ENCODE measurements at regions of chr1 and their contacts with region 1.

Region 1: GRCh38 chr1:67430352-67431155 is at the start of gene SERBP1:
- H3K4me3 Mint-ChIP-seq: peak within 1 kb of the TSS; percentile 97
- H3K27ac Mint-ChIP-seq: peak within 1 kb of the TSS; percentile 95
- H3K4me1 Mint-ChIP-seq: peaks cover 50% of the 10 kb centered on the region
- H3K27me3 Mint-ChIP-seq: no peaks in the 10 kb centered on the region

Region 2: DNA sequence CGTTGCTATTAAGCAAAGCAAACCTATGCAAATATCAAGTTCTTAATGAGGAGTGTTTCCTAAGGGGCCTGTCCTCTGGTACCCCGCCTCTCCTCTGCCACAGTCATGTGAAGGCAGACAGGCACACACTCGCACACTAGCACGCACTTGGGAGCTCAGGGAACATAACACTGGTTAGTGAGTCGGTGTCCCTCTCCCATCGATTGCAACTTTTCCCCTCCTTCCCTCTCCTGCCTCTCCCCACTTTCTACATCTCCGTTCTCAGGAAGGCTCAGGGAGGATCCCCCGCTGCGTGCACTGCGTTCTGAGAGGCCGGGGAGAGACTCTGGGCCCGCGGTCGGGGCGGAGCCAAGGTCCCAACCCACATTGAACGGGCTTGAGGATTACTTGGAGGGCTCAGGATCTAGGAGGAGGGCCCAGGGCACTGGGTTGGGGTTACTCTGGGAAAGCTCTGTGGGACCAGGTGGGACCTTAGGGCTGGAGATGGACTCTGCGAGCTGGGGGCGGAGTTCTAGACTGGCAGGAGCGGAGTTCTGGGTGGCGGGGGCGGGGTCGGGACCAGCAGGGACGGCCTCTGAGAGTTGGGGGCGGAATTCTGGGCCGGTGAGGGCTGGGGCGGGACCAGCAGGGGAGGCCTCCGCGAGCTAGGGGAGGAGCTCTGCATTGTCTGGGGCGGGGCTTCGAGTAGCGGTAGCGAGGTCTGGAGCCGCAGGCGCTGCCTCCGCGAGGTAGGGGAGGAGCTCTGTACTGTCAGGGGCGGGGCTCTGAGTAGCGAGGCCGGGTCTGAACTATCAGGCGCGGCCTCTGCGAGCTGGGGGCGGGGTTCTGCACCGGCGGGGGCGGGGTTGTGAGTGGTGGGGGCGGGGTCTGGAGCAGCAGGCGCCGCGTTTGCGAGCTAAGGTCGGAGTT is 2010.6 kb before region 1 on chr1:
- intact Hi-C with region 1: loop called (anchors 10 kb)
- H3K4me3 Mint-ChIP-seq: no peak overlapping the region
- H3K27ac Mint-ChIP-seq: no peak overlapping the region
- H3K4me1 Mint-ChIP-seq: peaks cover 15% of the 10 kb centered on the region
- H3K27me3 Mint-ChIP-seq: no peaks in the 10 kb centered on the region

Region 3: DNA sequence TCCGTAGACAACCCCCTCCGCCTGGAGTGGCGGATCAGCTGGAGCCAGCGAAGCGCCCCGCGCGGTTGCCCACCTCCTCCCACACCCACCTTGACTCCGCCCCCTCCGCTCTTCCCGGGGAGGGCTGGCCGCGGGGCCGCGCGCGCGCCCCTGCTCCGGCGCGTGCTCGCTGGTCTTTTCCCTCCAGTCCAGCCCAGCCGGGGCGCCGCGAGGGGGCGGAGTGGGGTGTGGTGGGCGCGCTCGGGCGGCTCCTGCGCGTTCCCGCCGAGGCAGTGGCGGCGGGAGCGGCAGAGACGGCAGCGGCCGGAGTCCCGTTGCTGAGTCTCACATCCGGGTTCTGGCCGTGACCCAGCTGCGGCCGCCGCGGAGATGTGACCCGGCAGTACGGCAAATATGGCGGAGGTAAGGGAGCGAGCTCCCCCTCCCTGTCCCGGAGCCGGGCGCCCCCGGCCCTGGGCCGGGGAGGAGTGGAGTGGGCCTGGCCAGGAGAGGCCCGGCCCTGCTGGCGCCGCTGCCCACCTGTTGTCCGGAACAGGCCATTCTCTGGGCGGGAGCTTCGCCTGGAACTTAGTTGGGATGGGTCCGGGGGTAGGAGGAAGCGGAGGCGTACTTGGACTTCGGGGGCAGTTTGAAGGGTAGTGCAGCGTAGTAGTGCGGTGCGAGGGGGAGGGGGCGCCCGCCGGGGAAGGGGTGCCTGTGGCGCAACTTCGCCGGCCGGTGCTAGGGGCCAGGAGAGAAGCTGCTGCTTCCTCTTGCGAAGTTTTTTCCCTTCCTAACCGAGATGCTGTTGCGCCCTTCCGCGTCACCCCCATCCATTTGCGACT is 500.3 kb before region 1 on chr1:
- intact Hi-C with region 1: loop called (anchors 2 kb)
- H3K4me3 Mint-ChIP-seq: peak overlapping the region; percentile 94
- H3K27ac Mint-ChIP-seq: peak overlapping the region; percentile 96
- H3K4me1 Mint-ChIP-seq: peaks cover 33% of the 10 kb centered on the region
- H3K27me3 Mint-ChIP-seq: no peaks in the 10 kb centered on the region

Region 4: GRCh38 chr1:67053785-67054772 is 376.5 kb before region 1 on chr1 and contains the start of gene SLC35D1:
- intact Hi-C with region 1: loop called (anchors 10 kb)
- H3K4me3 Mint-ChIP-seq: peak within 1 kb of the TSS; percentile 88
- H3K27ac Mint-ChIP-seq: peak within 1 kb of the TSS; percentile 92
- H3K4me1 Mint-ChIP-seq: peaks cover 24% of the 10 kb centered on the region
- H3K27me3 Mint-ChIP-seq: no peaks in the 10 kb centered on the region

Region 5: DNA sequence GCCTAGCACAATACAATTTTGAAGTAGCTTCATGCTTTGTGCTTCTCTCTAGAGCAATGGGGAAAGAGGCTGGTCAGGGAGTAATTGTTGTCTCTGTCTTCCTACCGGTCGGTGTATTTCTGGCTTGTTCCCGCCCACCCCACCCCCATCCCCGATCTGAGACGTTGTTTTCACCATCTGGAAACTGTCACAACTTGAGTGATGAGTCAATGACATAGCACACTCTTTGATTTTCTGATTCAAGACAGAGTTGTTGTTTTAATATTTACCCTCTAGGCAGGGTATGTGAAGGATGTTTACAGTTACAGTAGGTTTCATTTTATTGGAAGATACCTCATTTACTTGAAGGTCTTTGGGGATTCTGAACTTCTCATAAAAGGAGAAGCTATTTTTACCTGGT is 115.9 kb before region 1 on chr1:
- intact Hi-C with region 1: loop called (anchors 5 kb)
- H3K4me3 Mint-ChIP-seq: no peak overlapping the region
- H3K27ac Mint-ChIP-seq: no peak overlapping the region
- H3K4me1 Mint-ChIP-seq: peaks cover 15% of the 10 kb centered on the region
- H3K27me3 Mint-ChIP-seq: peaks cover 7% of the 10 kb centered on the region

Region 6: DNA sequence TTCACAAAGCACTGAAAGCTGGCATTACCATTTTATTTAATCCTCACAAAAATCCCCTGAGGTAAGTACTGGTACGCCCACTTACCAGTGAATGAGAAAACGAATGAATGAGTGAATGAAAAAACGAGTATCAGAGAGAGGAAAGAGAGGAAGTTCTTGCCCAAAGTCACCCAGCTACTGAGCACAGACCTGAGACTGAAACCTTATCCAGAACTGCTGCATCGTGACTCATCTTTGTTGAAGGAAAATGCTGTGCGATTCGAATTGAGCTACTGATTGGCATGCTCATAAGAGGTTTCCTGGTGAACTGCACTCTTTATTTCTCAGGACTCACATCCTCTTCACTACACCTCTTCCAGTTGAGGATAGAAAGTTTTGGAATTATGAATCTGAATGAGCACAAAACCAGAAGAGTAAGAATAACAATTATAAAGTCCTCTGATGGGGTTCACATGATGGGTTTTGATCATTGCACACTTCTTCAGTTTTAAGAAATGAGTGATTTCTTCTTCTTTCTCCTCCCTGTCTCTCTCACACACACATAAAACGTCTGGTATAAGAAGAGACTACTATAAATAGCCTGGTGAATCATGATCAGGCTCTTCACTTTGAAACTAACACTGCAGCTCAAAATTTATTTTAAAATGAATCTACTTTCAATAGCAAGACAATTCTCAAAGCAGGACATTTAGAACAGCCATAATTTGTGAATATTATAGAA is 90.8 kb before region 1 on chr1:
- intact Hi-C with region 1: no loop called
- H3K4me3 Mint-ChIP-seq: no peak overlapping the region
- H3K27ac Mint-ChIP-seq: no peak overlapping the region
- H3K4me1 Mint-ChIP-seq: peaks cover 11% of the 10 kb centered on the region
- H3K27me3 Mint-ChIP-seq: peaks cover 1% of the 10 kb centered on the region

Region 7: DNA sequence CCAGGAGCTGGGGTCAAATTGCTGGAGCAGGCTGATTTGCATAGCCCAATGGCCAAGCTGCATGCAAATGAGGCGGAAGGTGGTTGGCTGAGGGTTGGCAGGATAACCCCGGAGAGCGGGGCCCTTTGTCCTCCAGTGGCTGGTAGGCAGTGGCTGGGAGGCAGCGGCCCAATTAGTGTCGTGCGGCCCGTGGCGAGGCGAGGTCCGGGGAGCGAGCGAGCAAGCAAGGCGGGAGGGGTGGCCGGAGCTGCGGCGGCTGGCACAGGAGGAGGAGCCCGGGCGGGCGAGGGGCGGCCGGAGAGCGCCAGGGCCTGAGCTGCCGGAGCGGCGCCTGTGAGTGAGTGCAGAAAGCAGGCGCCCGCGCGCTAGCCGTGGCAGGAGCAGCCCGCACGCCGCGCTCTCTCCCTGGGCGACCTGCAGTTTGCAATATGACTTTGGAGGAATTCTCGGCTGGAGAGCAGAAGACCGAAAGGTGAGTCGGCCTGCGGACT is 254.6 kb after region 1 on chr1 and contains the start of gene GADD45A:
- intact Hi-C with region 1: loop called (anchors 5 kb)
- H3K4me3 Mint-ChIP-seq: peak within 1 kb of the TSS; percentile 92
- H3K27ac Mint-ChIP-seq: peak within 1 kb of the TSS; percentile 89
- H3K4me1 Mint-ChIP-seq: peaks cover 50% of the 10 kb centered on the region
- H3K27me3 Mint-ChIP-seq: no peaks in the 10 kb centered on the region

Measured in dendritic cell treated with granulocyte-macrophage colony-stimulating factor and Interleukin-4, amounts not matched to agents 40 ng/mL and 50 ng/mL, for 4 days (primary cell).